Sigmoid colon (tissue), 7 donors: ENCODE measurements at regions of chr10 and their contacts with region 1.

Region 1: DNA sequence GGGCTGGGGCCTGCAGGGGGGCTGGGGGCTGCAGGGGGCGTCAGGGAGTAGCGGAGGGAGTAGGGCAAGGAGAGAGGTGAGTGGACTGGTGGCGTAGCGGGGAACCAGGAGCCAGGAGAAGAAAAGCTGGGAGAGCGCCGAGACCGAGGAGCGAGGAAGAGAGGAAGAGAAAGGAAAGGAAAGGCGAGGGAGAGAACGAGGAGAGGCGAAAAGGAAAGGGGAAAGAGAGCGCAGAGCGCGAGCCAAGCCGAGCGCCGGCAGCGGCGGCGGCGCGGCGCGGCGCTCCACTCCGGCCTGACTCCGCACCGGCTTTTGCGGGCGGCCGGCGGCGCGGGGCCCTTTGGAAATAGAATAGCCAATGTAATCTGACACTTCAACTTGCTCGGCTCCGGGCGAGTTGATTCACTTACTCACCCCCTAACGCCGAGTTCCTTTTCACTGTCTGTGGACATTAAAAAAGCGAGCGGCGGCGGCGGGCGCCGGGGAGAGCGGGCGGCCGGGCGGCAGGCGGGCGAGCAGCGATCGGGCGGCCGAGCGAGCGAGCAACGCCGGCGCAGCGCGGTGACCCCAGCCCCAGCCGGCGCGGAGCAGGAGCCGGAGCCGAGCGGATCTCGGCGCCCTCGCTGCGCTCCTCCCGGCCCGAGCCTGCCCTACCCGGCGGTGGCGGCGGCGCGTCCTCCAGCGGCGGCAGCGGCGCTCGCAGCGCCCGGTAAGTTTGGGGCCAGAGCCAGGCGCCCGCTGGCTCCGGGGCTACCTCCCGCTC is at the start of gene ZMIZ1:
- DNase-seq: peak; percentile 97
- H3K4me3 ChIP-seq: peak within 1 kb of the TSS; percentile 70 to 96 (median 84)
- H3K27ac ChIP-seq: peak within 1 kb of the TSS; percentile 96 to 100 (median 99)
- H3K4me1 ChIP-seq: peaks cover 2 to 47% (median 40%) of the 10 kb centered on the region in 4 donors
- H3K27me3 ChIP-seq: no peaks in the 10 kb centered on the region
- CTCF ChIP-seq: peak in 2 of 4 experiments; percentile 12 to 16
- EP300 ChIP-seq: no peak
- POLR2A ChIP-seq: no peak
- total RNA-seq, gene ZMIZ1: 26.5 to 49.3 (median 37.5) TPM

Region 2: GRCh38 chr10:78211561-78212051 is 857.1 kb before region 1 on chr10:
- intact Hi-C with region 1: loop called (anchors 5 kb)
- DNase-seq: no peak
- H3K4me3 ChIP-seq: no peak overlapping the region
- H3K27ac ChIP-seq: peak overlapping the region; percentile 41 to 64 (median 44)
- H3K4me1 ChIP-seq: peaks cover 0 to 39% (median 33%) of the 10 kb centered on the region in 4 donors
- H3K27me3 ChIP-seq: no peaks in the 10 kb centered on the region
- CTCF ChIP-seq: peak in 3 of 4 experiments; percentile 37 to 53 (median 50)
- EP300 ChIP-seq: no peak
- POLR2A ChIP-seq: no peak

Region 3: GRCh38 chr10:78552261-78552811 is 516.4 kb before region 1 on chr10:
- intact Hi-C with region 1: loop called (anchors 5 kb)
- DNase-seq: peak; percentile 95
- H3K4me3 ChIP-seq: no peak overlapping the region
- H3K27ac ChIP-seq: peak overlapping the region; percentile 75 to 86 (median 81)
- H3K4me1 ChIP-seq: peaks cover 0 to 45% (median 38%) of the 10 kb centered on the region in 4 donors
- H3K27me3 ChIP-seq: no peaks in the 10 kb centered on the region
- CTCF ChIP-seq: no peak
- EP300 ChIP-seq: no peak
- POLR2A ChIP-seq: no peak

Region 4: DNA sequence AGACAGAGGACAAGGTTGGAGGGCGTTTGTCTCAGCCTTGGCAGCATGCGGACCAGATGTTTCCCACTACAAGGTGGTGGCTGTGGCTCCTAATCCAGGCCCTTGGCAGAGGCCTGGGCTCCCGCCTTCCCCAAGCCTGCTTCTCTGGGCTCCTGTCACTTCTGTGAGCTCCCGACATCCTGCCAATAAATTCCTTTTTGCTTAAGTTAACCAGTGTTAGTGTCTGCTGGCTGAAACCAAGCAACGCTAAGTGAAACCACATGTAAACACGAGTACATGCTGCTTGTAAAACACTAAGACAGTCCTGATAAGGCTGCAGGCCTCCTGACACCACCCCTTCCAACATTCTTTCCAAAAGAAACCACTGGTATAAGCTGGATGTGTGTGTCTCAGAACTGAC is 263.6 kb before region 1 on chr10:
- intact Hi-C with region 1: loop called (anchors 10 kb)
- DNase-seq: peak; percentile 83
- H3K4me3 ChIP-seq: no peak overlapping the region
- H3K27ac ChIP-seq: peak overlapping the region; percentile 72 to 83 (median 80)
- H3K4me1 ChIP-seq: peaks cover 0 to 67% (median 48%) of the 10 kb centered on the region in 4 donors
- H3K27me3 ChIP-seq: no peaks in the 10 kb centered on the region
- CTCF ChIP-seq: no peak
- EP300 ChIP-seq: peak in 3 of 4 donors; percentile 10 to 58 (median 39)
- POLR2A ChIP-seq: no peak

Region 5: GRCh38 chr10:79112881-79113431 is 44.2 kb after region 1 on chr10:
- intact Hi-C with region 1: loop called (anchors 1 kb)
- DNase-seq: peak; percentile 91
- H3K4me3 ChIP-seq: no peak overlapping the region
- H3K27ac ChIP-seq: peak overlapping the region; percentile 78 to 94 (median 87)
- H3K4me1 ChIP-seq: peaks cover 0 to 100% (median 87%) of the 10 kb centered on the region in 4 donors
- H3K27me3 ChIP-seq: no peaks in the 10 kb centered on the region
- CTCF ChIP-seq: no peak
- EP300 ChIP-seq: peak in 2 of 4 donors; percentile 3 to 73
- POLR2A ChIP-seq: no peak

Region 6: GRCh38 chr10:79178614-79179163 is 109.9 kb after region 1 on chr10:
- intact Hi-C with region 1: loop called (anchors 5 kb)
- DNase-seq: peak; percentile 83
- H3K4me3 ChIP-seq: no peak overlapping the region
- H3K27ac ChIP-seq: peak overlapping the region; percentile 66 to 82 (median 73)
- H3K4me1 ChIP-seq: peaks cover 0 to 100% (median 96%) of the 10 kb centered on the region in 4 donors
- H3K27me3 ChIP-seq: no peaks in the 10 kb centered on the region
- CTCF ChIP-seq: no peak
- EP300 ChIP-seq: no peak
- POLR2A ChIP-seq: no peak